HepG2 (cell line): ENCODE measurements at regions of chr10 and their contacts with region 1.

Region 1: GRCh38 chr10:125822878-125823662 is at the starts of genes BCCIP and UROS:
- DNase-seq: peak; percentile 85
- ATAC-seq: peak; percentile 87
- H3K4me3 ChIP-seq: peak within 1 kb of the TSS; percentile 89 to 92 (median 91)
- H3K27ac ChIP-seq: peak within 1 kb of the TSS; percentile 95
- H3K4me1 ChIP-seq: peaks cover 52% of the 10 kb centered on the region
- H3K27me3 ChIP-seq: no peaks in the 10 kb centered on the region; a peak in 1 of 5 replicates
- CTCF ChIP-seq: no peak
- EP300 ChIP-seq: no peak
- POLR2A ChIP-seq: peak; percentile 77 to 83
- RAD21 ChIP-seq: no peak; the same call in 1 of the 2 replicates
- total RNA-seq, gene BCCIP: 132 and 213 TPM in 2 replicates
- total RNA-seq, gene UROS: 48.2 and 49.9 TPM in 2 replicates

Region 2: DNA sequence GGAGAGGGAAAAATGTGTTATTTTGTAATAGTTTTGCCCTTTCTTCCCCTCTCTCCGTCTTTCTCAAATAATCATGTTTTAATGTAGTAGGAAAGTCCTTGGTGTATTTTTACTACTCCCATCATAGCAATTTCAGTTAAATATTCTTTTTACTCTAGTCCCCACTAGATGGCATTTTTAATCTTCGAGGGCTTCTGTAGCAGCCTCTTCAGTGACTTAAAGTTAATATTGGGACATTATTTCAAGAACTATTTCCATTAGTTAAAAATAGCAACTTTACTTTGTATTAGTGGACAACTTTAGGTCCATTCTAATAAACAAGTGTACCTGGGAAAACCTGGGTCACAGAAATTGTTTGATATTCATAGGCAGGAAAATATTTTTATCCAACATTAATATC is 80.6 kb before region 1 on chr10:
- CTCF ChIA-PET with region 1: no interaction called
- POLR2A ChIA-PET with region 1: no interaction called
- in situ Hi-C with region 1: no loop called
- intact Hi-C with region 1: loop called (anchors 10 kb)
- DNase-seq: peak; percentile 8
- ATAC-seq: no peak
- H3K4me3 ChIP-seq: no peak overlapping the region
- H3K27ac ChIP-seq: no peak overlapping the region
- H3K4me1 ChIP-seq: no peaks in the 10 kb centered on the region
- H3K27me3 ChIP-seq: no peaks in the 10 kb centered on the region
- CTCF ChIP-seq: no peak
- EP300 ChIP-seq: no peak
- POLR2A ChIP-seq: no peak
- RAD21 ChIP-seq: no peak

Region 3: DNA sequence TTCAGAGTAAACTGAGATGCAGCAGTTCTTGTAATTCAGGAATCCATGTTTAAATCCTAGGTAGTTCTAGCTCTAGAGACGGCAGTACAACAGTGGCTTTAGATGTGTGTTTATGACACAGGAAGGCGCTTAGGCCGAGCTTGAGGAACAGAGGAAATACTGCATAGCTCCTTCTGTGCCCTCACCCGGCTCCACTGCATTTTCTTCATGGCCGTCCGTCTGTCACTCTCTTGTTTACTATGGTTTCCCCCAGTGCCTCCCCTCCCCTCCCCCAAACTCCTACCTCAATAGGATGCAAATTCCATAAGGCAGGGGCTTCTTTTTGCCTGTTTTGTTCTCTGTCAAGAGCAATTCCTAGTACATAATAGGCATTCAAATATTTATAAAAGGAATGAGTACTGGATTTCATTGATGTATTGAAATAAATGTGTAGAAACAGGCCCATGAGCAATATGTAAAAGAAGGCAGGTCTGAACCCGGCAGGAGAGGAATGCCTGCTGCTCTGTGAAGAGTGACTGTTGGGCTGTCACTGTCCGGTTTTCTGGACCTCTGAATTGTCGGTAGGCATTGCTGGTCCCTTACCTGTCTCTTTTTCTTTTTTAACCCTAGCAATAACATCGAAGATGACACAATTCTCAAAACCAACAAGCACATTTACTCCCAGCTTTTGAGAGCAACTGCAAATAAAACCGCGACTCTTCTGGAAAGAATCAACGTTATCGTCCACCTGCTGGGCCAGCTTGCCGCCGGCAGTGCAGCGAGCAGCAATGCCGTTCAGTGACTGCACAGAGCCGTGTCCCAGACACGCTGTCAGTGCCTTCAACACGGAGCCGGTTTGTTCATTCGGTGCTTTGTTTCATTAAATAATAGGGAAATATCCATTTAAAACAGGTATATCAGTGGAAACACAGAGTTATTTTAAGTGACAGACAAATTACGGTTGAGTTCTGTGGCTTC is 60.1 kb before region 1 on chr10:
- CTCF ChIA-PET with region 1: no interaction called
- POLR2A ChIA-PET with region 1: no interaction called
- in situ Hi-C with region 1: no loop called
- intact Hi-C with region 1: no loop called
- DNase-seq: no peak
- ATAC-seq: no peak
- H3K4me3 ChIP-seq: no peak overlapping the region
- H3K27ac ChIP-seq: no peak overlapping the region
- H3K4me1 ChIP-seq: no peaks in the 10 kb centered on the region
- H3K27me3 ChIP-seq: no peaks in the 10 kb centered on the region
- CTCF ChIP-seq: no peak
- EP300 ChIP-seq: no peak
- POLR2A ChIP-seq: no peak
- RAD21 ChIP-seq: no peak

Region 4: DNA sequence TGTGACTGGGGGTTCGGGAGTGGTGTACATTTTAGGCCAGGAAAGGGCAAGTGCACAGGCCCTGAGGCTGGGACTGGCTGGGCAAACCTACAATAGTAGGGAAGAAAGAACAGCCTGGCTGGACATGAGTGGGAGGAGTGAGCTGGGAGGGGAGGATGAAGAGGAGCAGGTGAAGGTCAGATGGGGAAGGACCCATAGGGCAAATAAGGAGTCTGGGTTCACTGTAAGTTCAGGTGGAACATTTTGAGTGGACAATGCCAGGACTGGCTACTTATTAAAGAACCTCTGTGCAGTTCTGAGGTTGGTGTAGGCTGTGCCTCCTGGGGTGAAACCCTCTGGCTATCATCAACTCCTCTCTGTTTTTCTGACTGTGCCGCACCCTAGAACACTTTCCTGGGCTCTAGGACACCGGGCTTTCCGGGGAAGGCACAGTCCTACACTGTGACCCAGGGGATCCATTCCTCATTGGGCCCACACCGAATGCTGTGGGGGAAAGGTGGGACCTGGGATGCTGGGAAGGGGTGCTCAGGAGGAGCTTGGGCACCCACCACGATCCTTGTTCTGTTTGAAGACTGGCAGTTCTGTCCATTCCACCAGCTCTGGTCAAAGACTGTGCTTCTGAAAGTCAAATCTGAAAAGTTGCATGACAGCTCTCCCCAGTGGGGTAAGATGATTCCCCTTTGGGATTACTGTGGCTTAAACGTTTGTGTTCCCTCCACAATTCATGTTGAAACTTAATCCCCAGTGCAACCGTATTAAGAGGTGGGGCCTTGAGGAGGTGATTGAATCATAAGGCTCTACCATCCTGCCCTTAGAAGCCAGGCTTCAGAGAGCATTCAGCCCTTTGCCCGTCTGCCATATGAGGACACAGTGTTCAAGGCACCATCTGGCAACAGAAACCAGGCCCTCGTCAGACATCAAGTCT is 43.4 kb before region 1 on chr10:
- CTCF ChIA-PET with region 1: no interaction called
- POLR2A ChIA-PET with region 1: interaction called, 3 read pairs
- in situ Hi-C with region 1: no loop called
- intact Hi-C with region 1: loop called (anchors 10 kb)
- DNase-seq: no peak
- ATAC-seq: no peak
- H3K4me3 ChIP-seq: no peak overlapping the region
- H3K27ac ChIP-seq: no peak overlapping the region
- H3K4me1 ChIP-seq: peaks cover 23% of the 10 kb centered on the region
- H3K27me3 ChIP-seq: no peaks in the 10 kb centered on the region; a peak in 3 of 5 replicates
- CTCF ChIP-seq: no peak
- EP300 ChIP-seq: no peak
- POLR2A ChIP-seq: no peak
- RAD21 ChIP-seq: no peak

Region 5: GRCh38 chr10:125911975-125912374 is 88.9 kb after region 1 on chr10:
- CTCF ChIA-PET with region 1: no interaction called
- POLR2A ChIA-PET with region 1: no interaction called
- in situ Hi-C with region 1: no loop called
- intact Hi-C with region 1: no loop called
- DNase-seq: peak; percentile 72
- ATAC-seq: peak; percentile 84
- H3K4me3 ChIP-seq: no peak overlapping the region
- H3K27ac ChIP-seq: no peak overlapping the region
- H3K4me1 ChIP-seq: peaks cover 14% of the 10 kb centered on the region; the same call in 1 of the 2 replicates
- H3K27me3 ChIP-seq: peaks cover 6 to 15% of the 10 kb centered on the region in 2 experiments; a peak in 4 of 5 replicates
- CTCF ChIP-seq: no peak
- EP300 ChIP-seq: peak in 1 of 2 experiments; percentile 37; a peak in 1 of 4 replicates
- POLR2A ChIP-seq: no peak
- RAD21 ChIP-seq: no peak

Region 6: DNA sequence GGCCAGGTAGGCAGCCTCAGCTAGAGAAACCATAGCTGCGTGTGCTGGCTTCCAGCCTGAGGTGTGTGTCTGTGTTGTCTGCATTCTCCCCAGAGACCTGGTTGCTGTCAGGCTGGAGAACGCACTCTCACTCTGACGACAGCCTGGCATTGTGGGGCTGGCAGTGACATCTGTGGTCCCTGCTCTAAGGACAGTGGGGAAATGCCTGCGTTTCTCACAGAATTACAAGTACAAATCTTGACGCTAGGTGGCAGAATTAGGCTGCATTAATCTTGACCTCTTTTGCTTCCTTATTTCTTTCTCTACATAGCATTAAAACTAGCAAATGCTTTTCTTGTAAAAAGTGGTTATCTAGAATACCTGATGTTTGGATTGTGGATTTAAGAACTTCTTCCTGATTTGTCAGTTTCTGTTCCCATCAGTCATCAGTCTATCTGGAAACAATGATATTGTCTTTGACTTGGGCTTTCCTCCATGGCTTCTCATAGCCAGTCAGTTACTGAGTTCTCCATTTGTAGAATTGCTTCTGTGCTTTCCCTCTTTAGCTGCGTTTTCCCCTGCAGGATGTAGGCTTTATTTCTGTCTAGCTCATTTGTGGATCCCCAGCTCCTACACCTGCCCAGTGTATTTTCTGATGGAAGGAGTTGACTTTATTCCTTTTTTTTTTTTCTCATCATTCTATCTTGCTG is 159.3 kb after region 1 on chr10:
- CTCF ChIA-PET with region 1: no interaction called
- POLR2A ChIA-PET with region 1: no interaction called
- in situ Hi-C with region 1: no loop called
- intact Hi-C with region 1: no loop called
- DNase-seq: peak; percentile 41
- ATAC-seq: peak; percentile 75
- H3K4me3 ChIP-seq: no peak overlapping the region
- H3K27ac ChIP-seq: no peak overlapping the region
- H3K4me1 ChIP-seq: no peaks in the 10 kb centered on the region
- H3K27me3 ChIP-seq: peaks cover 3 to 21% of the 10 kb centered on the region in 2 experiments
- CTCF ChIP-seq: peak; percentile 73
- EP300 ChIP-seq: no peak
- POLR2A ChIP-seq: no peak
- RAD21 ChIP-seq: 0 out of 2 replicates have a peak, but pooled peaks have one; percentile 40